ENCODE measurements at regions of chr11 and their contacts with region 1.

Region 1: GRCh38 chr11:64846998-64847666 is 2.7 kb upstream of the CDC42BPG start:
- DNase-seq: peak; percentile 92
- H3K4me3 ChIP-seq: no peak overlapping the region
- H3K27ac ChIP-seq: no peak overlapping the region
- H3K4me1 ChIP-seq: peaks cover 6% of the 10 kb centered on the region
- H3K27me3 ChIP-seq: no peaks in the 10 kb centered on the region
- CTCF ChIP-seq: peak; percentile 94 to 98 (median 94)
- POLR2A ChIP-seq: no peak

Region 2: GRCh38 chr11:64742889-64743590 is 104.1 kb before region 1 on chr11:
- intact Hi-C with region 1: no loop called
- DNase-seq: peak; percentile 73
- H3K4me3 ChIP-seq: peak overlapping the region; percentile 53 to 67
- H3K27ac ChIP-seq: peak overlapping the region; percentile 63
- H3K4me1 ChIP-seq: peaks cover 30% of the 10 kb centered on the region
- H3K27me3 ChIP-seq: no peaks in the 10 kb centered on the region
- CTCF ChIP-seq: peak; percentile 78 to 79 (median 79)
- POLR2A ChIP-seq: no peak

Region 3: DNA sequence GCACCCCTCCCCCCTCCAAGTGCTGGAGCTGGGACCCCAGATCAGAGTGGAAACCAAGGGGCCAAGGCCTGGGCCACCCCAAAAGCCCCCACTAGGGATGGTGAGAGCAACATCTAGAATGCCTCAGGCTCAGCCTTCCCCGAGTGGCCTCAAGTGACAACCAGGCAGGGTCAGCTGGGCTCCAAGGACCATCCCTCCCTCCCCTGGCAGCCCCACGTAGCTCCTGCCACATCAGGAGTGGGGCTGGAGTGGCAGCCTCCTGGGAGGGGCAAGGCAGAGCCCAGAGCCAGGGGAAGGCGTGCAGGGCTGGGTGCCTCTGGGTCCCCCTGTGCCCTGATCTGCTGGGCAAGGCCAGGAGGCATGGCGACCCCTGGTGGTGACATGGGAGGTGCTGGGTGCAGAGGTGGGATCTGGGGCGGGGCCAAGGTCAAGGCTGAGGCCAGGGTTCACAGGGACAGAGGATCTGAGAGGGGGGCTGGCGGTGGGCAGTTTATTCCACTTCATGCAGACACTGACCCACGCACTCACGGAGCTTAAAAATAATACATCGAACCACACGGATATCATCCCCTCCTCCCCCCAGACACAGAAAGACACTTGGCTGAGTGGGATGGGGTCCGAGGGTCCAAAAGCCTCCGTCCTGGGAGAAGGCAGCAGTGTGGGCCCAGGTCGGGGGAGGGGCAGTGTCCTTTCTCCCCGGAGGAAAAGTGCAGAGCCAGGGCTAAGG is 47.1 kb after region 1 on chr11:
- intact Hi-C with region 1: loop called (anchors 5 kb)
- DNase-seq: peak; percentile 84
- H3K4me3 ChIP-seq: no peak overlapping the region
- H3K27ac ChIP-seq: no peak overlapping the region
- H3K4me1 ChIP-seq: no peaks in the 10 kb centered on the region
- H3K27me3 ChIP-seq: no peaks in the 10 kb centered on the region
- CTCF ChIP-seq: peak; percentile 75 to 88 (median 80)
- POLR2A ChIP-seq: no peak

Region 4: DNA sequence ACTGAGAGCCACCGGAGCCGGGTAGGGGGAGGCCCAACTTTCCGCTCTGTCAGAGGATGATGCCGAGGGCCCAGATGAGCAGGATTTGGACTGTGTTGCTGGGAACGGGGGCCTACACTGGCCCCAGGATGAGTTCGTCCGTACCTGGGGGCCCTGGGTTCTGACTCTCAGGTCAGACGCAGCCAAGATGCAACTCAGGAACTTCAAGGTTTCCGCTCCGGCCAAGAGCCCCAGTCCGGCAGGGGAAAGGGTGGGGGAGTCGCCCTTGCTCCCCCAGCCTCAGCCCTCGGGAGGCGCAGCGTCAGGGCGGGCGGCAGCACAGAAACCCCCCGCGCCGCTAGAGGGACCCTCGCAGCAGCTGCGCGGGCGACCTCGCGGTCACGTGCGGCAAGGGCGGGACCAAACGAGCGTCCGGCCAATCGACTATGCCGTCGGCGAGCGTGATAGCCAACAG is 166.6 kb after region 1 on chr11:
- intact Hi-C with region 1: loop called (anchors 10 kb)
- DNase-seq: peak; percentile 94
- H3K4me3 ChIP-seq: peak overlapping the region; percentile 55 to 88
- H3K27ac ChIP-seq: peak overlapping the region; percentile 90 to 98
- H3K4me1 ChIP-seq: no peaks in the 10 kb centered on the region
- H3K27me3 ChIP-seq: no peaks in the 10 kb centered on the region
- CTCF ChIP-seq: peak in 1 of 3 experiments; percentile 4
- POLR2A ChIP-seq: no peak